H1 (cell line): ENCODE measurements at regions of chr20 and their contacts with region 1.

Region 1: GRCh38 chr20:47772995-47773716 is 12.1 kb downstream of the SULF2 start:
- DNase-seq: no peak
- H3K4me3 ChIP-seq: no peak overlapping the region
- H3K27ac ChIP-seq: no peak overlapping the region
- H3K4me1 ChIP-seq: no peaks in the 10 kb centered on the region
- H3K27me3 ChIP-seq: no peaks in the 10 kb centered on the region
- CTCF ChIP-seq: no peak
- EP300 ChIP-seq: no peak
- POLR2A ChIP-seq: no peak
- RAD21 ChIP-seq: no peak

Region 2: DNA sequence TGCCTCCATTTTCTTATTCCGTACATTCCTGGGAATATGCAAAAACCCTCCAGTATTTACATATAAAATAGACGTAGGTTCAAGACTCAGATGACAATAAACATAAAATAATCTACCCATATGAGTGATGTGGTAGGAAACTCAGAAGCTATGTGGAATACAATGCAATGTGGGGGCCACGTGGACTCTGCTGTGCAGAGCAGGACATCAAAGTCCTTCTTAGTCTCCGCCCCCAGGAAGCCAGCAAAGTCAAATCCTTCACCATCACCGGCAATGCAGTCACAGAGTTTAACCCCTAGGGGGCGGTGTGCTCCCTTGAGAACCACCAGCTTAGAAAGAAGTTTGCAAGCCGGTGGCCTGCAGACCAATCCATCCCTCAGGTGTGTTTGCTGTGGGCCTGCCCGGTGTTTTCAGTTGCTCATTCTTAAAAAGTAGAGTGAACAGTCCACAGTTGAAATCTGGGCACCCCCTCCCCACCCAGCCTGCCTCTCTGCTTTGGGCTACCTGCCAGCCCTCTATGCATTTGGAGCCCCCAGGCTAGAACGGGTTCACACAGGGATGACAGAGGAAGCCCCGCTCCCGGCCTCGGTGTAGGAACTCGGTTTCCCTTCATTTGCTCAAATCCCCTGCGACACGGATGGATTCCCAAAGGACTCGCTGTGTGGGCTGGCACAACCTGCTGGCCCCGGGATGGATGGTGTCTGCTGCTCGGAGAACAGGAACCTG is 47.7 kb before region 1 on chr20:
- CTCF ChIA-PET with region 1: interaction called, 10 read pairs
- POLR2A ChIA-PET with region 1: no interaction called
- DNase-seq: peak; percentile 70 to 85
- H3K4me3 ChIP-seq: no peak overlapping the region
- H3K27ac ChIP-seq: no peak overlapping the region
- H3K4me1 ChIP-seq: no peaks in the 10 kb centered on the region; a peak in 1 of 7 replicates
- H3K27me3 ChIP-seq: no peaks in the 10 kb centered on the region
- CTCF ChIP-seq: peak; percentile 79 to 94 (median 84)
- EP300 ChIP-seq: no peak
- POLR2A ChIP-seq: no peak
- RAD21 ChIP-seq: peak; percentile 89 to 93

Region 3: DNA sequence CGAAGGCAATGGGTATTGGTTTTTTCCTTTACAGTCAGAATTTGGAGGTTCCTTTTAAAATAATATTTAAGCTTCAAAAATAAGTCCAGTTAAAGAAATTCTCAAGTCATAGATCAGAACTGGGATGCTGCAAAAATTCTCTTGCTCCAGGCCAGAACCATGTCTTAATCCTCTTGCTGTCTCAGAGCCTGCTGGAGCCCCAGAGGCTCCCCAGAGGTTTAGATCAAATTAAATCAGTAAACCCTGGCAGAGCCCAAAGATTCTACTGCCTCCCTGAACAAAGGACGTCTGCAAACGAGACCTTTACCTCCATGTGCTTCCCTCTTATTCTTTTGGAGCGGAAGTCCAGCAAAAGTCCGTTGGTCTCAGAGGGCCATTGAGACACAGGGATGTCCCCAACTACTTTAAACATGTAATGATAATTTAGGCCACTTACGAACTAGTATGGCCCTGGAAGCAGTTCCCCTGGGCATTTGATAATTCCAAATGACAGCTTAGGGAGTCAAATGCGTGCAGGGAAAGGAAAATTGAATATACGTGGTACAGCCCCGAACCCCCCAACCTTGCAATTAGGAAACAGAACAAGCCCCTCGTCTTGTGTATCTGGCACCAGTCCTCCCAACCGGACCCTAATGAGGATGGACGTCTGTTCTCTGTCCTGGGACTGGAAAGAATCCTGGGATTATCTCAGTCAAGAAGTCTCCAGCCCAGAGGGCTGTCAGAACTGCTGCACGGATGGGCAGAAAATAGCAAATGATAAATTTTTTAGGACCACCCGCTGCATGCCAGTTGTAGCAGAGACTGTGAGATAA is 19.4 kb before region 1 on chr20:
- CTCF ChIA-PET with region 1: no interaction called
- POLR2A ChIA-PET with region 1: no interaction called
- DNase-seq: no peak
- H3K4me3 ChIP-seq: no peak overlapping the region
- H3K27ac ChIP-seq: no peak overlapping the region
- H3K4me1 ChIP-seq: peaks cover 0 to 14% (median 6%) of the 10 kb centered on the region in 4 experiments; a peak in 4 of 7 replicates
- H3K27me3 ChIP-seq: no peaks in the 10 kb centered on the region
- CTCF ChIP-seq: no peak
- EP300 ChIP-seq: no peak
- POLR2A ChIP-seq: no peak
- RAD21 ChIP-seq: no peak

Region 4: DNA sequence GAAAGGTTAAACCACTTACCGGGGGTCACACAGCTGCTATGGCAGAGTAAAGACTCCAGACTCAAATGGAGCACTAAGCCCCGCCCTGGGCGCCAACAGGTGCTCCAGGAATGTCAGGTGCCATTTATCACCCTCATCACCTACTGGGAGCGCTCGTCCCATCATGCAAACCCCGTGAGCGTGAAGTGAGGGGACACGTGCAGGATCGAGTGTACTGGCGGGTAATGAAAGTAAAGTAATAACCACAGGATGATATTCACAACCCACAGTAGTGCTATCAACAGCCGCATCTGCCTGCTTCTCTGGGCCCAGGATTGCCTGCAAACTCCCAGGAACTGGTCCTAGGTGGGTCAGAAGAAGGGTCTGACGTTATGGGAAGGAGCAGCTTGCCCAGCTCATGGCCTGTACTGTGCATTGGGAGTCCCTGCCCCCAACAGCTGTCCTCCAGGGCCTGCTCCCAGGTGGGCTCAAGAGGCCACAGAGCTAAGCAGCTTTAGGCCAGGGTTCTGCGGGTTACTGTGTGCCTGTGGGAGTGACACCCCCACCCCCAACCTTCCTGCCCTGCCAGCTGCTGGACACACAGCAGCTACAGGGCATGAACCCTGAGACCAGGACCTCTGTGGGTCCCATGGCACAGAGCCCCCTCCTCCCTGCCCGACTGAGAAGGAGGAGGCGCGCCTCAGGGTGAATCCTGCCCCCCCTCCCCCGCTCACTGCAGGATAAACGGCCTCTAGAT is 132.6 kb after region 1 on chr20:
- CTCF ChIA-PET with region 1: no interaction called
- POLR2A ChIA-PET with region 1: no interaction called
- DNase-seq: no peak
- H3K4me3 ChIP-seq: no peak overlapping the region
- H3K27ac ChIP-seq: no peak overlapping the region
- H3K4me1 ChIP-seq: peaks cover 0 to 3% (median 0%) of the 10 kb centered on the region in 4 experiments; a peak in 3 of 7 replicates
- H3K27me3 ChIP-seq: no peaks in the 10 kb centered on the region
- CTCF ChIP-seq: no peak
- EP300 ChIP-seq: no peak
- POLR2A ChIP-seq: no peak
- RAD21 ChIP-seq: no peak